ENCODE measurements at regions of chr1 and their contacts with region 1.

Region 1: GRCh38 chr1:156500797-156501499 is 373 bp upstream of the MEF2D start:
- DNase-seq: peak; percentile 86 to 97 (median 94)
- ATAC-seq: peak; percentile 66
- H3K4me3 ChIP-seq: peak overlapping the region; percentile 87 to 92
- H3K4me3 Mint-ChIP-seq: peak overlapping the region; percentile 92
- H3K27ac ChIP-seq: peak overlapping the region; percentile 93 to 97
- H3K27ac Mint-ChIP-seq: peak overlapping the region; percentile 98
- H3K4me1 ChIP-seq: peaks cover 76% of the 10 kb centered on the region
- H3K4me1 Mint-ChIP-seq: peaks cover 76% of the 10 kb centered on the region
- H3K27me3 ChIP-seq: no peaks in the 10 kb centered on the region
- H3K27me3 Mint-ChIP-seq: no peaks in the 10 kb centered on the region
- CTCF ChIP-seq: peak; percentile 68

Region 2: GRCh38 chr1:155978325-155978972 is 522.5 kb before region 1 on chr1 and contains the start of gene ARHGEF2:
- CTCF ChIA-PET with region 1: no interaction called
- POLR2A ChIA-PET with region 1: no interaction called
- intact Hi-C with region 1: no loop called
- DNase-seq: peak; percentile 46 to 88 (median 79)
- ATAC-seq: peak; percentile 66
- H3K4me3 ChIP-seq: peak within 1 kb of the TSS; percentile 70 to 100
- H3K4me3 Mint-ChIP-seq: peak within 1 kb of the TSS; percentile 97
- H3K27ac ChIP-seq: peak within 1 kb of the TSS; percentile 59 to 91
- H3K27ac Mint-ChIP-seq: peak within 1 kb of the TSS; percentile 94
- H3K4me1 ChIP-seq: peaks cover 72% of the 10 kb centered on the region
- H3K4me1 Mint-ChIP-seq: peaks cover 69% of the 10 kb centered on the region
- H3K27me3 ChIP-seq: no peaks in the 10 kb centered on the region
- H3K27me3 Mint-ChIP-seq: no peaks in the 10 kb centered on the region
- CTCF ChIP-seq: no peak
- total RNA-seq, gene ARHGEF2: 51.6 to 52.3 TPM

Region 3: GRCh38 chr1:156456622-156457465 is 44.1 kb before region 1 on chr1:
- CTCF ChIA-PET with region 1: interaction called, 8 read pairs
- POLR2A ChIA-PET with region 1: interaction called, 23 read pairs
- intact Hi-C with region 1: loop called (anchors 1 kb)
- DNase-seq: peak; percentile 92 to 99 (median 96)
- ATAC-seq: peak; percentile 84
- H3K4me3 ChIP-seq: peak overlapping the region; percentile 57 to 62
- H3K4me3 Mint-ChIP-seq: peak overlapping the region; percentile 93
- H3K27ac ChIP-seq: peak overlapping the region; percentile 83 to 89
- H3K27ac Mint-ChIP-seq: peak overlapping the region; percentile 100
- H3K4me1 ChIP-seq: peaks cover 4% of the 10 kb centered on the region
- H3K4me1 Mint-ChIP-seq: peaks cover 17% of the 10 kb centered on the region
- H3K27me3 ChIP-seq: no peaks in the 10 kb centered on the region
- H3K27me3 Mint-ChIP-seq: no peaks in the 10 kb centered on the region
- CTCF ChIP-seq: no peak

Region 4: DNA sequence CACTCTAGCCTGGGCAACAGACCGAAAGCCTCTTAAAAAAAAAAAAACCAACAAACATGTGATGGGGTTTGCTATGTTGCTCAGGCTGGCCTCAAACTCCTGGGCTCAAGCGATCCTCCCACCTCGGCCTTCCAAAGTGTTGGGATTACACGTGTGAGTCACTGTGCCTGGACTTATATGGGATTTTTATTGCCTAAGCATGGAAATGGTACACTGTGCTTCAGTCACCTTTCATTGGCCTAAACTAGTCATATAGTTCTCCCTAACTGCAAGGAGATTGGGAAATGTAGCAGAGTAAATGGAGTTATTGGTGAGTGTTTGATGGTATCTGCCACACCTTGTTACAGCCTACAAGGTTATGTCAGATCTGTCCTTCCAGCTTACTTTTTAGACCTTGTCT is 16.8 kb after region 1 on chr1:
- CTCF ChIA-PET with region 1: interaction called, 3 read pairs
- POLR2A ChIA-PET with region 1: interaction called, 15 read pairs
- intact Hi-C with region 1: loop called in 1 of 2 experiments (anchors 2 kb)
- DNase-seq: no peak
- ATAC-seq: no peak
- H3K4me3 ChIP-seq: no peak overlapping the region
- H3K4me3 Mint-ChIP-seq: no peak overlapping the region
- H3K27ac ChIP-seq: no peak overlapping the region
- H3K27ac Mint-ChIP-seq: no peak overlapping the region
- H3K4me1 ChIP-seq: no peaks in the 10 kb centered on the region
- H3K4me1 Mint-ChIP-seq: peaks cover 1% of the 10 kb centered on the region
- H3K27me3 ChIP-seq: no peaks in the 10 kb centered on the region
- H3K27me3 Mint-ChIP-seq: no peaks in the 10 kb centered on the region
- CTCF ChIP-seq: no peak

Region 5: GRCh38 chr1:156571949-156572662 is 71.2 kb after region 1 on chr1 and contains the start of gene IQGAP3:
- CTCF ChIA-PET with region 1: no interaction called
- POLR2A ChIA-PET with region 1: no interaction called
- intact Hi-C with region 1: loop called in 1 of 2 experiments (anchors 1 kb)
- DNase-seq: peak; percentile 49 to 83 (median 72)
- ATAC-seq: peak; percentile 94
- H3K4me3 ChIP-seq: peak within 1 kb of the TSS; percentile 26 to 39
- H3K4me3 Mint-ChIP-seq: peak within 1 kb of the TSS; percentile 78
- H3K27ac ChIP-seq: no peak within 1 kb of the TSS
- H3K27ac Mint-ChIP-seq: no peak within 1 kb of the TSS
- H3K4me1 ChIP-seq: peaks cover 13% of the 10 kb centered on the region
- H3K4me1 Mint-ChIP-seq: peaks cover 14% of the 10 kb centered on the region
- H3K27me3 ChIP-seq: peaks cover 14 to 17% of the 10 kb centered on the region in 2 experiments
- H3K27me3 Mint-ChIP-seq: peaks cover 34% of the 10 kb centered on the region
- CTCF ChIP-seq: no peak
- total RNA-seq, gene IQGAP3: 0.05 TPM in 1 of 2 experiments, not detected in the other

Region 6: DNA sequence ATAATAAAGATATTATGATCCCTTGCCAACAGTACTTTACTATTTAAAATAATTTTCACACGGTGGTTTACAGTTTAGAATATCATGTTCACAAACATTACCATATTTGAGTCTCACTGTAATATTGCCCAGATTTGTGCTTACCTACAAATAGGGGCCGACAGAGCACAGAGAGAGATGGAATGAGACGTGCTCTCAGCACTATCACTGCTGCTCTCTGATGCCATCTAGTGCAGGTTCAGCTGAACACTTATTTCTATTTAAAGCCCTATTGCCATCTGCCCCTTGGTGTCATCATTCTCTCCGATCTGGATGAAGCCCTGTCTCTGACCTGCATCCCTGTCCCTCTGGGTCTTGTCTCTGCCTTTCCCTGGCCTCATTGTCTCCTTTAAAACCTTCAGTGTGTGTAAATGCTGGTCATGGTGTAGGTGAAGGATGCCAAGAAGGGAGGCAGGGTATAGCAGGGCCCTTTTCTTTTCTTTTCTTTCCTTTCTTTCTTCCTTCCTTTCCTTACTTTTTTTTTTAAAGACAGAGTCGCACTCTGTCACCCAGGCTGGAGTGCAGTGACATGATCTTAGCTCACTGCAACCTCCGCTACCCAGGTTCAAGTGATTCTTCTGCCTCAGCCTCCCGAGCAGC is 107.2 kb after region 1 on chr1:
- CTCF ChIA-PET with region 1: interaction called, 12 read pairs
- POLR2A ChIA-PET with region 1: interaction called, 4 read pairs
- intact Hi-C with region 1: no loop called
- DNase-seq: peak; percentile 37 to 89 (median 65)
- ATAC-seq: peak; percentile 95
- H3K4me3 ChIP-seq: no peak overlapping the region
- H3K4me3 Mint-ChIP-seq: no peak overlapping the region
- H3K27ac ChIP-seq: no peak overlapping the region
- H3K27ac Mint-ChIP-seq: no peak overlapping the region
- H3K4me1 ChIP-seq: peaks cover 8% of the 10 kb centered on the region
- H3K4me1 Mint-ChIP-seq: peaks cover 11% of the 10 kb centered on the region
- H3K27me3 ChIP-seq: peaks cover 0 to 2% of the 10 kb centered on the region in 2 experiments
- H3K27me3 Mint-ChIP-seq: peaks cover 9% of the 10 kb centered on the region
- CTCF ChIP-seq: peak; percentile 88

Region 7: DNA sequence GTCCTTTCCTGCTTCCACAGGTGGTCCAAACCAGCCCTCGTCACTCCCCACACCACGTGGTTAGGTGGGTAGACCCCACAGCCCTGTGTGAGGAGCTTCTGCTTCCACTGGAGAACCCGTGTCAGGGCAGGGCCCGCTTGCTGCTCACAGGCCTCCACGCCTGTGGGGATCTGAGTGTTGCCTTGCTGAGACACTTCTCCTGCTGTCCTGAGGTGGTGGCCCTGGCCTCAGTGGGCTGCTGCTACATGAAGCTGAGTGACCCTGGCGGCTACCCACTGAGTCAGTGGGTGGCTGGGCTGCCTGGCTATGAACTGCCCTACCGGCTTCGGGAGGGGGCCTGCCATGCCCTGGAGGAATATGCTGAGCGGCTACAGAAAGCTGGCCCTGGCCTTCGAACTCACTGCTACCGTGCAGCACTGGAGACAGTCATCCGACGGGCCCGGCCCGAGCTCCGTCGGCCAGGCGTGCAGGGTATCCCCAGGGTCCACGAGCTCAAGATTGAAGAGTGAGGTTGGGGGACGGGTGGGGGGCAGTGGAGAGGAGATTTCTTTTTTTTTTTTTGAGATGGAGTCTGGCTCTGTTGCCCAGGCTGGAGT is 233.1 kb after region 1 on chr1:
- CTCF ChIA-PET with region 1: no interaction called
- POLR2A ChIA-PET with region 1: no interaction called
- intact Hi-C with region 1: no loop called
- DNase-seq: no peak
- ATAC-seq: no peak
- H3K4me3 ChIP-seq: no peak overlapping the region
- H3K4me3 Mint-ChIP-seq: no peak overlapping the region
- H3K27ac ChIP-seq: no peak overlapping the region
- H3K27ac Mint-ChIP-seq: no peak overlapping the region
- H3K4me1 ChIP-seq: no peaks in the 10 kb centered on the region
- H3K4me1 Mint-ChIP-seq: peaks cover 14% of the 10 kb centered on the region
- H3K27me3 ChIP-seq: no peaks in the 10 kb centered on the region
- H3K27me3 Mint-ChIP-seq: no peaks in the 10 kb centered on the region
- CTCF ChIP-seq: no peak

Region 8: GRCh38 chr1:156767101-156767878 is 266.3 kb after region 1 on chr1 and contains the start of gene PRCC:
- CTCF ChIA-PET with region 1: no interaction called
- POLR2A ChIA-PET with region 1: interaction called, 4 read pairs
- intact Hi-C with region 1: loop called in 1 of 2 experiments (anchors 1 kb)
- DNase-seq: peak; percentile 93 to 100 (median 97)
- ATAC-seq: peak; percentile 90
- H3K4me3 ChIP-seq: peak within 1 kb of the TSS; percentile 66 to 69
- H3K4me3 Mint-ChIP-seq: no peak within 1 kb of the TSS
- H3K27ac ChIP-seq: peak within 1 kb of the TSS; percentile 87 to 90
- H3K27ac Mint-ChIP-seq: no peak within 1 kb of the TSS
- H3K4me1 ChIP-seq: peaks cover 29% of the 10 kb centered on the region
- H3K4me1 Mint-ChIP-seq: peaks cover 41% of the 10 kb centered on the region
- H3K27me3 ChIP-seq: no peaks in the 10 kb centered on the region
- H3K27me3 Mint-ChIP-seq: no peaks in the 10 kb centered on the region
- CTCF ChIP-seq: no peak
- total RNA-seq, gene PRCC: 55.6 to 58.4 TPM

Measured in CD8-positive, alpha-beta T cell (primary cell).